Caco-2 (cell line): ENCODE measurements at regions of chr14 and their contacts with region 1.

Region 1: GRCh38 chr14:60266021-60266937 is 17.3 kb downstream of the PPM1A start:
- DNase-seq: peak in 1 of 2 experiments; percentile 54
- H3K4me3 ChIP-seq: no peak overlapping the region
- H3K4me3 Mint-ChIP-seq: no peak overlapping the region
- H3K27ac Mint-ChIP-seq: no peak overlapping the region
- H3K4me1 ChIP-seq: no peaks in the 10 kb centered on the region
- H3K4me1 Mint-ChIP-seq: peaks cover 7% of the 10 kb centered on the region
- H3K27me3 ChIP-seq: no peaks in the 10 kb centered on the region
- H3K27me3 Mint-ChIP-seq: no peaks in the 10 kb centered on the region
- CTCF ChIP-seq: peak; percentile 59 to 67

Region 2: DNA sequence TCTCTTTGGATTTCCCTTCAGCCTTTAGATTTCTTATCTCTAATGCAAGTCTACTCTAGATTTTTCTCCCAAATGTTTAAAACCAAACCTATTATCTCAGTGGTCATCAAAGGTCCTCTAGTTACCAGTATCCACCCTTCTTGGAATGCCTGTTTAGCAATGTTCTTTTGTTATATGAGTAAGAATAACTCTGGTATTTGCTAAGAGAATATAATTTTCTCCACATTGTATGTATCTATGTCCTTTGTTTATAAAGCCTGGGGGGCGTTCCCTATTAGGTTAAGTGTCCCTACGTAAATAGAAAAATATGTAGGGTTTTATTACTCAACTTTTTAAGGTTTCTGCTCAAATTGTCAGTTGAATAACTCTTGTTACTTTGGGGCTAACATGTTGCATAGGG is 10.1 kb after region 1 on chr14:
- CTCF ChIA-PET with region 1: no interaction called
- POLR2A ChIA-PET with region 1: no interaction called
- intact Hi-C with region 1: loop called (anchors 1 kb)
- DNase-seq: peak in 1 of 2 experiments; percentile 14
- H3K4me3 ChIP-seq: no peak overlapping the region
- H3K4me3 Mint-ChIP-seq: peak overlapping the region; percentile 30
- H3K27ac Mint-ChIP-seq: no peak overlapping the region
- H3K4me1 ChIP-seq: peaks cover 45% of the 10 kb centered on the region
- H3K4me1 Mint-ChIP-seq: peaks cover 40% of the 10 kb centered on the region
- H3K27me3 ChIP-seq: no peaks in the 10 kb centered on the region
- H3K27me3 Mint-ChIP-seq: no peaks in the 10 kb centered on the region
- CTCF ChIP-seq: no peak

Region 3: GRCh38 chr14:60311417-60311816 is 45.1 kb after region 1 on chr14:
- CTCF ChIA-PET with region 1: no interaction called
- POLR2A ChIA-PET with region 1: no interaction called
- intact Hi-C with region 1: loop called (anchors 5 kb)
- DNase-seq: no peak
- H3K4me3 ChIP-seq: no peak overlapping the region
- H3K4me3 Mint-ChIP-seq: no peak overlapping the region
- H3K27ac Mint-ChIP-seq: no peak overlapping the region
- H3K4me1 ChIP-seq: no peaks in the 10 kb centered on the region
- H3K4me1 Mint-ChIP-seq: no peaks in the 10 kb centered on the region
- H3K27me3 ChIP-seq: no peaks in the 10 kb centered on the region
- H3K27me3 Mint-ChIP-seq: peaks cover 4% of the 10 kb centered on the region
- CTCF ChIP-seq: no peak

Region 4: GRCh38 chr14:60331201-60332045 is 65.1 kb after region 1 on chr14:
- CTCF ChIA-PET with region 1: interaction called, 23 read pairs
- POLR2A ChIA-PET with region 1: no interaction called
- intact Hi-C with region 1: loop called (anchors 1 kb)
- DNase-seq: peak; percentile 73 to 78
- H3K4me3 ChIP-seq: peak overlapping the region; percentile 43
- H3K4me3 Mint-ChIP-seq: peak overlapping the region; percentile 88
- H3K27ac Mint-ChIP-seq: peak overlapping the region; percentile 68
- H3K4me1 ChIP-seq: no peaks in the 10 kb centered on the region
- H3K4me1 Mint-ChIP-seq: no peaks in the 10 kb centered on the region
- H3K27me3 ChIP-seq: no peaks in the 10 kb centered on the region
- H3K27me3 Mint-ChIP-seq: peaks cover 7% of the 10 kb centered on the region
- CTCF ChIP-seq: peak; percentile 74 to 84

Region 5: GRCh38 chr14:60485598-60486251 is 219.4 kb after region 1 on chr14 and contains the start of gene C14orf39:
- CTCF ChIA-PET with region 1: no interaction called
- POLR2A ChIA-PET with region 1: no interaction called
- intact Hi-C with region 1: loop called (anchors 5 kb)
- DNase-seq: no peak
- H3K4me3 ChIP-seq: no peak within 1 kb of the TSS
- H3K4me3 Mint-ChIP-seq: no peak within 1 kb of the TSS
- H3K27ac Mint-ChIP-seq: no peak within 1 kb of the TSS
- H3K4me1 ChIP-seq: no peaks in the 10 kb centered on the region
- H3K4me1 Mint-ChIP-seq: no peaks in the 10 kb centered on the region
- H3K27me3 ChIP-seq: no peaks in the 10 kb centered on the region
- H3K27me3 Mint-ChIP-seq: peaks cover 3% of the 10 kb centered on the region
- CTCF ChIP-seq: no peak
- total RNA-seq, gene C14orf39: not detected in 2 replicates